Psoas muscle (tissue), 8 donors: ENCODE measurements at regions of chr18 and their contacts with region 1.

Region 1: DNA sequence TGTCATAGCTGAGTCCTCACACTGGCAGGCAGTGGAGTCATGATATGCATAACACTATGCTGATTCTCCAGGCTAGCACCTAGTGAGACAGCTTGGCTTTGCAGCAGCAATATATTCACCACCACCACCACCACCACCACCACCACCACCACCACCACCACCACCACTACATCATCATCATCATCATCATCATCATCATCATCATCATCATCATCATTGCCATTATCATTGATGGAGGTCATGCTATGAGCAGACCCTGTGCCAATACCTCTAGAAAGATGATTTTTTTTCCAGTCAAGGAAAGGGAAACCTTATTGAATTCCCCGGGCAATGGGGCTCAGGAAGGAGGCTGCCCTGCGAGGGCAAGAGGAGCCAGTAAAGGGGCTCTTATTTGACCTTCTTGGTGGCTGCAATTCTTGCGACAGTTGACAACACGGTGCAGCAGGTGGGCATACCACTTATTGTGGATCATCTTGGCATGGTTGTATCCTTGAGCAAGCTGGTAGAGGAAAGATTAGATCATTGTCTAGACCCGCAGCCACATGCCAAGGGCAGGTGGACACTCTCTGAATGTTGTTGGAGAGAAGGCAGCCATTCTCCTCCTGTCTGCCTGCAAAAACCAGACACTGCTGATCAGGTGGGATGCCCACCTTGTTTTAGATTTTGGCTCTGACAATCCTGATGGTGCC is 170.1 kb upstream of the CHST9 start:
- DNase-seq: no peak
- ATAC-seq: peak in 3 of 4 donors; percentile 58 to 78 (median 71)
- H3K4me3 ChIP-seq: no peak overlapping the region
- H3K27ac ChIP-seq: no peak overlapping the region
- H3K4me1 ChIP-seq: no peaks in the 10 kb centered on the region
- H3K27me3 ChIP-seq: no peaks in the 10 kb centered on the region
- CTCF ChIP-seq: no peak

Region 2: GRCh38 chr18:26196605-26197004 is 1158.6 kb before region 1 on chr18:
- intact Hi-C with region 1: no loop called
- DNase-seq: no peak
- ATAC-seq: no peak
- H3K4me3 ChIP-seq: no peak overlapping the region
- H3K27ac ChIP-seq: no peak overlapping the region
- H3K4me1 ChIP-seq: no peaks in the 10 kb centered on the region
- H3K27me3 ChIP-seq: no peaks in the 10 kb centered on the region
- CTCF ChIP-seq: no peak

Region 3: DNA sequence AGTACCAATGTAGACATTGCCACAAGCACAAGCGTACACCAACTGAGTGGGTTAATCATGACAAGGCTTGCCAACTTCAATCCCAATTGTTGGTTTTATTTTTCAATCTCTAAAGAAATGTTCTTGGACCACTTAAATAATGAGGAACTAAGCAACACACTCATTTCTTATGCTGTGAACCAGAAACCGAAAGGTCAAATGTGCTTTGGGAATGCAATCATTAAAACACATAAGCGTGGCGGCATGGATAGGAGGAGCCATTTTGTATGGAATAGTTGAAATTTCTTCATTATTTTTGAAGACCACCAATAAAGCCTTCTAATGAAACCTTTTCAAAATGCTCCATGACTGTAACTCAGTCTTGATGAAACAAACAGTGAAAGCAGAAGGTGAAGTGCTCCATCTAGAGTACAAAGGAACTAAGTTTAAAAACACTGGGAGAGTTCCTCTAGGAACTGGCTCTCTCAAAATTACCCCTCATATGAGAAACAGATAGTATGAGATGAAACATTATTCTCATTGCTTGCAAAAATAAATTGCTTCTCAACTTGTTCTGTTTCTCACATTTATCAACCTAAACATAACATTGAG is 56.9 kb before region 1 on chr18:
- intact Hi-C with region 1: no loop called
- DNase-seq: no peak
- ATAC-seq: no peak
- H3K4me3 ChIP-seq: no peak overlapping the region
- H3K27ac ChIP-seq: no peak overlapping the region
- H3K4me1 ChIP-seq: no peaks in the 10 kb centered on the region
- H3K27me3 ChIP-seq: no peaks in the 10 kb centered on the region
- CTCF ChIP-seq: peak; percentile 18

Region 4: GRCh38 chr18:27314996-27315395 is 40.2 kb before region 1 on chr18:
- intact Hi-C with region 1: loop called in 1 of 2 experiments (anchors 5 kb)
- DNase-seq: no peak
- ATAC-seq: no peak
- H3K4me3 ChIP-seq: no peak overlapping the region
- H3K27ac ChIP-seq: no peak overlapping the region
- H3K4me1 ChIP-seq: peaks cover 6% of the 10 kb centered on the region
- H3K27me3 ChIP-seq: no peaks in the 10 kb centered on the region
- CTCF ChIP-seq: no peak

Region 5: GRCh38 chr18:27520401-27520800 is 165.2 kb after region 1 on chr18:
- intact Hi-C with region 1: no loop called
- DNase-seq: no peak
- ATAC-seq: no peak
- H3K4me3 ChIP-seq: no peak overlapping the region
- H3K27ac ChIP-seq: no peak overlapping the region
- H3K4me1 ChIP-seq: no peaks in the 10 kb centered on the region
- H3K27me3 ChIP-seq: no peaks in the 10 kb centered on the region
- CTCF ChIP-seq: no peak